IMR-90 (cell line): ENCODE measurements at regions of chr15 and their contacts with region 1.

Region 1: GRCh38 chr15:64905119-64905831 is 6.4 kb upstream of the ANKDD1A start:
- DNase-seq: peak; percentile 60
- ATAC-seq: peak; percentile 95
- H3K4me3 ChIP-seq: peak overlapping the region; percentile 3; the same call in 1 of the 2 replicates
- H3K27ac ChIP-seq: peak overlapping the region; percentile 2; the same call in 1 of the 2 replicates
- H3K4me1 ChIP-seq: peaks cover 3% of the 10 kb centered on the region
- H3K27me3 ChIP-seq: no peaks in the 10 kb centered on the region
- CTCF ChIP-seq: peak; percentile 84
- POLR2A ChIP-seq: no peak
- RAD21 ChIP-seq: peak; percentile 81

Region 2: GRCh38 chr15:64731012-64731806 is 174.1 kb before region 1 on chr15:
- CTCF ChIA-PET with region 1: no interaction called
- POLR2A ChIA-PET with region 1: no interaction called
- dilution Hi-C with region 1: no loop called
- in situ Hi-C with region 1: loop called (anchors 5 kb)
- intact Hi-C with region 1: loop called (anchors 1 kb)
- DNase-seq: peak; percentile 59
- ATAC-seq: peak; percentile 80
- H3K4me3 ChIP-seq: no peak overlapping the region
- H3K27ac ChIP-seq: no peak overlapping the region
- H3K4me1 ChIP-seq: no peaks in the 10 kb centered on the region
- H3K27me3 ChIP-seq: no peaks in the 10 kb centered on the region
- CTCF ChIP-seq: peak; percentile 92
- POLR2A ChIP-seq: 0 out of 2 replicates have a peak, but pooled peaks have one; percentile 29
- RAD21 ChIP-seq: peak; percentile 96

Region 3: GRCh38 chr15:64841258-64842095 is 63.8 kb before region 1 on chr15 and contains the start of gene PLEKHO2:
- CTCF ChIA-PET with region 1: interaction called, 3 read pairs
- POLR2A ChIA-PET with region 1: no interaction called
- dilution Hi-C with region 1: no loop called
- in situ Hi-C with region 1: loop called (anchors 5 kb)
- intact Hi-C with region 1: loop called (anchors 1 kb)
- DNase-seq: peak; percentile 92
- ATAC-seq: peak; percentile 88
- H3K4me3 ChIP-seq: peak within 1 kb of the TSS; percentile 83
- H3K27ac ChIP-seq: peak within 1 kb of the TSS; percentile 92
- H3K4me1 ChIP-seq: peaks cover 17% of the 10 kb centered on the region
- H3K27me3 ChIP-seq: no peaks in the 10 kb centered on the region
- CTCF ChIP-seq: peak; percentile 35; the same call in 1 of the 2 replicates
- POLR2A ChIP-seq: peak; percentile 94
- RAD21 ChIP-seq: no peak; the same call in 1 of the 2 replicates
- total RNA-seq, gene PLEKHO2: 18.6 and 19.0 TPM in 2 replicates

Region 4: GRCh38 chr15:64865998-64866520 is 39.2 kb before region 1 on chr15:
- CTCF ChIA-PET with region 1: interaction called, 4 read pairs
- POLR2A ChIA-PET with region 1: no interaction called
- dilution Hi-C with region 1: no loop called
- in situ Hi-C with region 1: no loop called
- intact Hi-C with region 1: loop called (anchors 2 kb)
- DNase-seq: peak; percentile 98
- ATAC-seq: peak; percentile 96
- H3K4me3 ChIP-seq: no peak overlapping the region
- H3K27ac ChIP-seq: peak overlapping the region; percentile 91
- H3K4me1 ChIP-seq: peaks cover 48% of the 10 kb centered on the region
- H3K27me3 ChIP-seq: no peaks in the 10 kb centered on the region
- CTCF ChIP-seq: no peak
- POLR2A ChIP-seq: no peak
- RAD21 ChIP-seq: no peak